Heart left ventricle (tissue), 16 donors: ENCODE measurements at regions of chr3 and their contacts with region 1.

Region 1: GRCh38 chr3:32733631-32734229 is 48.7 kb downstream of the CNOT10 start:
- DNase-seq: no peak
- ATAC-seq: no peak
- H3K4me3 ChIP-seq: no peak overlapping the region
- H3K27ac ChIP-seq: no peak overlapping the region
- H3K4me1 ChIP-seq: peaks cover 0 to 4% (median 0%) of the 10 kb centered on the region in 12 donors
- H3K27me3 ChIP-seq: no peaks in the 10 kb centered on the region
- CTCF ChIP-seq: peak; percentile 32 to 61 (median 50)
- POLR2A ChIP-seq: no peak

Region 2: GRCh38 chr3:32781210-32781968 is 47.7 kb after region 1 on chr3:
- intact Hi-C with region 1: loop called in 2 of 10 experiments (anchors 5 to 10 kb)
- DNase-seq: peak; percentile 53 to 88 (median 75)
- ATAC-seq: peak; percentile 51 to 98 (median 92)
- H3K4me3 ChIP-seq: peak overlapping the region; percentile 31 to 70 (median 55)
- H3K27ac ChIP-seq: peak overlapping the region in 3 of 12 donors; percentile 0 to 31 (median 28)
- H3K4me1 ChIP-seq: peaks cover 0 to 15% (median 3%) of the 10 kb centered on the region in 12 donors
- H3K27me3 ChIP-seq: no peaks in the 10 kb centered on the region
- CTCF ChIP-seq: peak; percentile 70 to 92 (median 80)
- POLR2A ChIP-seq: no peak

Region 3: GRCh38 chr3:32934150-32934742 is 200.5 kb after region 1 on chr3:
- intact Hi-C with region 1: loop called (anchors 2 to 10 kb)
- DNase-seq: no peak
- ATAC-seq: no peak
- H3K4me3 ChIP-seq: no peak overlapping the region
- H3K27ac ChIP-seq: no peak overlapping the region
- H3K4me1 ChIP-seq: no peaks in the 10 kb centered on the region
- H3K27me3 ChIP-seq: no peaks in the 10 kb centered on the region
- CTCF ChIP-seq: peak; percentile 32 to 69 (median 55)
- POLR2A ChIP-seq: no peak